Posterior cingulate gyrus (tissue), 11 donors: ENCODE measurements at regions of chr5 and their contacts with region 1.

Region 1: DNA sequence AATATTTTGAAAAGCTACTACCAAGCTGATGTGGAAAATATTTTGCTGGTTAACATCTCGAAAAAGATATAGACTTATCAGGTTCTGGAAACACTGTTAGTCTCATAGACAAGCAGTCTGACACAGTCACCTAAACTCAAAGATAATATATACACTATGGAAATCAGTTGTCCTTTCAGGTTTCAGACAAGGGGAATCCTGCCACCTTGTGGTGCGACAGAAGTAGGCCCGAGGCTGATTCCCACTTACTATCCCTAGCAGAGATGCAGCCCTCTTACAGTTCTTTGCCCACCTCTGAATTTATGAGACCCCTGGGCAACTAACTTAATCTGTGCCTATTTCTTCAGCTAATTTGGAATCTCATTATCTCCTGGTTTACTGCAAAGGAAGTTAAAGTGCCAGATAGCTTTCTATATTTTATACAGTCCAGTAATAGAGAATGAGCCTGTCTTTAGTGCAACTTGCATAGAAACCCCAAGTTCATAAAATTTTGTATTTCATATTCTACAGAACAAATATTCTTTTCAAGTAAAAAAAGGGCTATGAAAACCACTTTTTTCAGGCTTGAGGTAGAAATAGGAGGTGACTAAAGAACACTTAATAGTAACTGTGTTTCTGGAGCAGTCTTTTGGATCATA is 16.9 kb downstream of the RAD1 start:
- DNase-seq: peak; percentile 42 to 95 (median 77)

Region 2: DNA sequence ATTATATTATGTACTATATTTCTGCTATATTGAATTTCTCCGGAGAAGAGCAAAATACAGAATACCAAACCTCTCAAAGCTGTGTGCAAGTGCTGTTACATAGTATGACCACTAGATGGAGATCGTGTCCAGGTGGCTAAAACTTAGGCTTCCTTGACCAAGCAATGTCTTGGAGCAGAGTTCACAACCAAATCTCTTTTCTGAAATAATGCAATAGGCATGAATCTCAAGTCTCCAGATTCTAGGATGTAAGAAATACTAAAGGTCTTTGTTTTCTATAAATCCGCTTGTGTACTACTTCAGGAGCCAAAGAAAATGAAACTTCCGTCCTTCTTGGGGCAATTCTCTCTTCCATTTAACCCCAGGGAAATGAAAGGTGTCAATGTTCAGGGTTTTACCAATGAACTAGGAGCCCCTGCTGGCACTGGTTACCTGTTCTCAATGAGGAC is 423.8 kb before region 1 on chr5:
- intact Hi-C with region 1: loop called (anchors 1 kb)
- DNase-seq: peak in 2 of 10 donors; percentile 26 to 41

Region 3: DNA sequence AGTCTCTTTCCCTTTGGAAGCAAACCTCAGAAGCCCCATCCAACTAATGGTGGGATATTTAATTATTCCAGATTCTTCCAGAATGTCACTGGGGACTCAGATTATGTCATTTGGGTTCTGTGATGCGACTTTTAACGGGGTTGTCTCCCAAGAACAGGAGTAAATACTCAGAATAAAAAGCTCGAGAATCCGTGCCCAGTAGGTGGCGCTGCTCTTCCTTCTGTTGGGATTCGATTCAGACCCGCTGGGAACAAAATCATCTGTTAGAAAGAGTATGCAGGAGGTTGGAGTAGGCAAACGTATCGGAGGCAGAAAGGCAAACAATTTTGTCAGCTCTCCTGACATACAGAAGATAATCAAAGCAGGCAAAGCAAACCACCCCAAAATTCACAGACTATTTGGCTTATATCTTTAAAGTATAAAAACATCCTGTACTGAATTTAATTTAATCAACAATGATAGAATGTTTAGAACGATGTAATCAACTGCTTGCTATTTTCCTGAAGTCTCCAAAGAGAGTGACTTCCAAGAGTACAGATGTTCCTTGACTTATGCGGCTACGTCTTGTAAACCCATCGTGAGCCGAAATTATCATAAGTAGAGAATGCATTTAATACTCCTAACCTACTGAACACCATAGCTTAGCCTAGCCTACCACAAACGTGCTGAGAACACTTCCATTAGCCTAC is 412.1 kb before region 1 on chr5:
- intact Hi-C with region 1: loop called (anchors 2 kb)
- DNase-seq: peak; percentile 69 to 97 (median 88)

Region 4: GRCh38 chr5:34522599-34523386 is 375.6 kb before region 1 on chr5:
- intact Hi-C with region 1: loop called (anchors 1 kb)
- DNase-seq: peak in 9 of 10 donors; percentile 47 to 94 (median 75)

Region 5: GRCh38 chr5:34656001-34656699 is 242.2 kb before region 1 on chr5 and contains the start of gene RAI14:
- intact Hi-C with region 1: loop called (anchors 10 kb)
- DNase-seq: peak; percentile 45 to 94 (median 60)

Region 6: DNA sequence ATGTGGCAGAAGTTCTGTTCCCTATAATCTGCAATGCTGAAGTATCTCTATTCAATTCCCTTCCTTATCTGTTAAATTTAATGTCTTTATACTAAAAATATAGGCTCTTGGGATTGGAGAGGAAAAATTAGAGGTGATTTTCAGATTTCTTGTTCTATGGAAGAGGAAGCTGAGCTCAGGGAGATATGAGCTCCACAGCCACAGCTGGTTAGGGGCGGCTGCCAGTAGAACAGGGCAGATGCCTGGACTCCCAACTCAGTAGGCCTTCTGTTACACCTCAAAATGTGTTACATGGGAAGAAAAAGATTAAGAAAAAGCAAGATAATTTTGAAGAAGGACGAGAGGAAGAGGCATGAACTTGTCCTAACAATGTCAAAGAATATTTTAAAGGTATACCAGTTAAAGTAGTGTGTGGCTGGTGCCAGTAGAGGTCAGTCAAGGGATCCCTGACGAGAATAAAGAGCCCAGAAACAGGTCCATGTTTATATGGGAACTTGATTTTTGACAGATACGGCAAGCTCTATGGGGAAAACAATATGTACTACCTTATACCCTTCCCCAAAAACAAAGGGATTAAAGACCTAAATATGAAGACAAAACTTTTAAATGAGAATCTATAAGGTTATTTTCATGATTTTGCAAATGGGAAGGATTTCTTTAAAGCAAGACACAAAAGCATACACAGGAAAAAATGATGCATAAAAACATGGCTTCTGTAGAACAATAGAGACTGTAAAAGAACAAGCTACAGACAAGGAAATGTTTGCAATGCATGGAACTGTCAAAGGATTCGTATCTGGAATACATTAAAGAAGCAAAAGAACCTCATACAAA is 59.7 kb after region 1 on chr5:
- intact Hi-C with region 1: no loop called
- DNase-seq: no peak